ENCODE measurements at regions of chr2 and their contacts with region 1.

Region 1: GRCh38 chr2:101558740-101559519 is 84.0 kb upstream of the RFX8 start:
- DNase-seq: no peak
- ATAC-seq: peak; percentile 72

Region 2: DNA sequence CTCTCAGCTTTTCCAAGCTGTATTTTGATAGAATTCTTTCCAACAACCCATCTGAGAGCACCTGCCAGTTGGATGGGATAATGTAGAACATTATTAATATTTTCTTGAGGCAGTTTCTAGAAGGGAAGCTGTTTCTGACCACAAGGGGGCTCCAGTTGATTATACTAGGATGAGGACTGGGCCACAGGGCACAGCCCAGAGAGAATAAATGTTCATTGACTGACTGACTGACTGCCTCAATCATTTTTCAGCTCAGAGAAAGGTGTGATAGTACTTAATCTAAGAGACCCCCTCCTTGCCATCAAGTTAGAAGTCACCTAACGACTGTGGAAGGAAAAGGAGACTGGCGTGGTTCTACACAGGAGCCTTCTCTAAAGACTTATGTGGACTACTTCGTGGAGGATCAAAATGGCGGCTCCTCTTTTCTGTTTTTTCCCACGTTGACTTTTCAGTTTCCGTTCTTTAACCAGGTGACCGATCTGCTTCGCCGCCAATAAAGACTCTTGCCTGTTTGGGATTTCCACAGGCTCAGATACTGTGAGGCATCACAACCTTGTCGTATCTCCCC is 139.8 kb before region 1 on chr2:
- intact Hi-C with region 1: loop called (anchors 5 kb)
- DNase-seq: no peak
- ATAC-seq: peak; percentile 81

Region 3: GRCh38 chr2:101518578-101519492 is 40.1 kb before region 1 on chr2:
- intact Hi-C with region 1: loop called (anchors 5 kb)
- DNase-seq: no peak
- ATAC-seq: peak; percentile 75

Region 4: DNA sequence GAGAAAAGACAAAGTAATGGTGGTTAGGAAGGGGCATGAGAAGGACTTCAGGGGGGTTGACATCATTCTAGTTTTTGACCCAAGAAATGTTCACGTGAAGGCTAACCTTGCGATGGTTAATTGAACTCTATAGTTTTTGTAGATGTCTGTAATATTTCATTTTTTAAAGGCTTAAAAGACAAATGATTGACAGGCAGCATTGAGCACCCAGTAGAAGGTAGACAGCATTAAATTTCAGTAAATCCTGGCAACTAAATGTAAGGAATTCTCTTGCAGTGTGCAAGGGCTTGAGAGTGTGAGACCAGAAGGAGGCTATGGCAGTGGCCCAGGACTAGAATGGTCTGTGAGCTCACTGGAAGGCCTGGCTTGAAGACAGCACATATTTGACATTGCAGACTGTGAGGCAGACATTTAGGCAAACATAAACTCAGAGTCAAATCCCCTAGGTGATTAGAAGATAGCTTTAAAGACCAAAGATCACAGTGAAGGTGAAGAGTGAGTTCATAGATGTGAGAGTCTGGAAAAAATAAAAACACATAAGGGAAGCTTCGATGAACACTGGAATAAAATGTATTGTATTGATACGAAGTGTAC is 38.5 kb after region 1 on chr2:
- intact Hi-C with region 1: no loop called
- DNase-seq: no peak
- ATAC-seq: peak; percentile 92

Region 5: DNA sequence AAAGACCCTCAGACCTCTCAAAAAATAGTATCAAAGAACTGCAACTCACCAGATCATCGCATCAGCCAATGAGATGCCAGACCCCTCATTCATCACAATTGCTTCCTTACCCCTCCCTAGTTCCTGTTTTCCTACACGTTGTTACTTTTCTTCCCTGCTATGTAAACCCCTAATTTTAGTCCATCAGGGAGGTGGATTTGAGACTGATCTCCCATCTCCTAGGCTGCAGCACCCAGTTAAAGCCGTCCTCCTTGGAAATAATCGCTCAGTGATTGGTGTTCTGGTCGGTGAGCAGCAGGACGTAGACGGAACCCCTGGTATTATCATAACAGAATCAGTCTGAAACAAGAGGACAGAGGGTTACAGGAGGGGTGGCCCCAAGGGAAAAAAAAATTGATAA is 94.5 kb after region 1 on chr2:
- intact Hi-C with region 1: loop called (anchors 5 kb)
- DNase-seq: no peak
- ATAC-seq: no peak

Region 6: GRCh38 chr2:102268510-102269209 is 709.7 kb after region 1 on chr2:
- intact Hi-C with region 1: no loop called
- DNase-seq: no peak
- ATAC-seq: no peak

Measured in Right ventricle myocardium inferior (tissue), 1 donor.